ENCODE measurements at regions of chr17 and their contacts with region 1.

Region 1: GRCh38 chr17:75740631-75741077 is 19.4 kb downstream of the ITGB4 start:
- DNase-seq: no peak
- H3K4me3 ChIP-seq: no peak overlapping the region
- H3K27ac ChIP-seq: no peak overlapping the region
- H3K4me1 ChIP-seq: peaks cover 0 to 10% (median 0%) of the 10 kb centered on the region in 4 donors
- H3K27me3 ChIP-seq: peaks cover 0 to 6% (median 0%) of the 10 kb centered on the region in 3 donors
- CTCF ChIP-seq: no peak
- EP300 ChIP-seq: no peak
- POLR2A ChIP-seq: no peak

Region 2: GRCh38 chr17:75673487-75673886 is 67.2 kb before region 1 on chr17:
- intact Hi-C with region 1: loop called (anchors 5 kb)
- DNase-seq: no peak
- H3K4me3 ChIP-seq: no peak overlapping the region
- H3K27ac ChIP-seq: no peak overlapping the region
- H3K4me1 ChIP-seq: peaks cover 9 to 45% (median 22%) of the 10 kb centered on the region in 4 donors
- H3K27me3 ChIP-seq: no peaks in the 10 kb centered on the region
- CTCF ChIP-seq: no peak
- EP300 ChIP-seq: no peak
- POLR2A ChIP-seq: no peak

Region 3: GRCh38 chr17:75978938-75979704 is 238.5 kb after region 1 on chr17 and contains the starts of genes ACOX1 and TEN1:
- intact Hi-C with region 1: no loop called
- DNase-seq: peak; percentile 97 to 99
- H3K4me3 ChIP-seq: peak within 1 kb of the TSS; percentile 72 to 86 (median 80)
- H3K27ac ChIP-seq: peak within 1 kb of the TSS; percentile 95 to 99 (median 97)
- H3K4me1 ChIP-seq: peaks cover 22 to 84% (median 66%) of the 10 kb centered on the region in 4 donors
- H3K27me3 ChIP-seq: no peaks in the 10 kb centered on the region
- CTCF ChIP-seq: peak in 4 of 7 experiments; percentile 7 to 49 (median 26)
- EP300 ChIP-seq: no peak
- POLR2A ChIP-seq: peak in 2 of 4 donors; percentile 73 to 84
- total RNA-seq, gene ACOX1: 28.1 to 133 (median 71.8) TPM
- total RNA-seq, gene TEN1: 14.2 to 121 (median 19.3) TPM in 4 of 5 donors, not detected in the other

Measured in stomach (tissue), 19 donors.